ENCODE measurements at regions of chr17 and their contacts with region 1.

Region 1: GRCh38 chr17:7614422-7615264 is at the start of gene FXR2:
- DNase-seq: peak; percentile 100
- total RNA-seq, gene FXR2: 83.5 TPM

Region 2: GRCh38 chr17:7572588-7573323 is 41.9 kb before region 1 on chr17:
- intact Hi-C with region 1: no loop called
- DNase-seq: peak; percentile 99

Region 3: DNA sequence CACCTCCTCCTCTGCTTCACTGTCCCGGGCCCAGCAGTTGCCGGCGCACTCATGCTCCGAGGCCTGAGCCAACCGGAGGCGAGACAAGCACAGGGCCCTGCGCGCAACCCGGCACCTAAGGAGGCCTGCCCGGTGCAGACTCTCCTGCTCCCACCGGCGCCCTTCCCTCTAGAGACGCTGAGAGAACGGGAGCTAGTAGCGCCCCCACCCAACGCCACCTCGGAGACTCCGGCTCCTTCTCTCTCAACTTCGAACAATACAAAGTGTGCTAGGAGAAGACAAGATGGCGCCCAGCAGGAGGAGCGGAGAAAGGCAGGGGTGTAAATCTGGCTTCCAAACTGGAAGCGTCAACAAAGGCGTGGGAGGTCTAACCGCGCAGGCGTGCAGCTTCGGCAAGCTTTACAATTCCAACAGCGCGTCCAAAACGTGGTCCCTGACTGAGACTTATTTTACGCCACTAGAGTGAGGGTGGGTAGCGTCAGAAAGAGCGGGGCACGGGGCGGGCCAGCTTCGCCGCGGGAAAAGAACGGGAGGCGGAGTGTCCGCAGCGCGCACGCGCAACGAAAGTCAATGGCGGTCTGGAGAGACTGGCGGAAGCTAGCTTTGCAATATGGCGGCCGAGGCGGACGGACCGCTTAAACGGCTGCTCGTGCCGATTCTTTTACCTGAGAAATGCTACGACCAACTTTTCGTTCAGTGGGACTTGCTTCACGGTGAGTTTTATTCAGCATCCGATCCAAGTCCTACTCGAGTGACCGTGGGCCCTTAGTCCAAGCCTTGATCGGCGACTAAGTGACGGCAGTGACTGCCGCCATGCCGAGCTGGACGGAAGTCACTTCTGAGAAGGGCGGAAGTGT is 31.2 kb before region 1 on chr17 and contains the start of gene MPDU1:
- intact Hi-C with region 1: loop called (anchors 2 kb)
- DNase-seq: peak; percentile 98
- total RNA-seq, gene MPDU1: 22.4 TPM

Region 4: DNA sequence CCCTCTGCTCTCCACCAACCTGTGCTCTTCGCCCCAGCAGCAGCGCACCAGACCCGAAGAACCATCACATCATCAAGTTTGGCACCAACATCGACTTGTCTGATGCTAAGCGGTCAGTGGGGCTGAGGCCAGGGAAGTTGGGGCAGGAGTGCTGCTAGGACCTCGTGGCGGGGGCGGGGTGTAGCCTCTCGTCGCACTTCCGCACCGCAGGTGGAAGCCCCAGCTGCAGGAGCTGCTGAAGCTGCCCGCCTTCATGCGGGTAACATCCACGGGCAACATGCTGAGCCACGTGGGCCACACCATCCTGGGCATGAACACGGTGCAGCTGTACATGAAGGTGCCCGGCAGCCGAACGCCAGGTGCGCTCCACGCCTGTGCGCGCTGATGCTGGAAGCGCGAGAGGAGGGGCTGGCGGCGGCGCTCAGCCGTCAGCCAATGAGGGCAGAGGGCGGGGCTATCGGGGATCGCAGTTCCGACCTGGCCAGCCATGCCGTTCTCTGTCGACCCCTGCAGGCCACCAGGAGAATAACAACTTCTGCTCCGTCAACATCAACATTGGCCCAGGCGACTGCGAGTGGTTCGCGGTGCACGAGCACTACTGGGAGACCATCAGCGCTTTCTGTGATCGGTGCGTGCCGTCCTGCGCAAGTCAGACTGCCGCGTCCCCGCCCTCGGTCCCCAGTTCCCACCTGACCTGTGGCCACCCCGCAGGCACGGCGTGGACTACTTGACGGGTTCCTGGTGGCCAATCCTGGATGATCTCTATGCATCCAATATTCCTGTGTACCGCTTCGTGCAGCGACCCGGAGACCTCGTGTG is 237.0 kb after region 1 on chr17:
- intact Hi-C with region 1: no loop called
- DNase-seq: peak; percentile 95

Measured in cardiac septum (tissue), 1 donor.